PC-3 (cell line): ENCODE measurements at regions of chr6 and their contacts with region 1.

Region 1: GRCh38 chr6:7541175-7542064 is at the start of gene DSP:
- DNase-seq: peak; percentile 86
- ATAC-seq: peak; percentile 72
- H3K4me3 ChIP-seq: peak within 1 kb of the TSS; percentile 95
- H3K27ac ChIP-seq: peak within 1 kb of the TSS; percentile 74
- H3K4me1 ChIP-seq: peaks cover 27% of the 10 kb centered on the region
- H3K27me3 ChIP-seq: no peaks in the 10 kb centered on the region
- CTCF ChIP-seq: no peak
- total RNA-seq, gene DSP: 54.7 and 71.6 TPM in 2 replicates

Region 2: GRCh38 chr6:7312616-7313504 is 228.6 kb before region 1 on chr6 and contains the start of gene SSR1:
- CTCF ChIA-PET with region 1: no interaction called
- POLR2A ChIA-PET with region 1: no interaction called
- intact Hi-C with region 1: loop called (anchors 1 kb)
- DNase-seq: peak; percentile 97
- ATAC-seq: peak; percentile 95
- H3K4me3 ChIP-seq: peak within 1 kb of the TSS; percentile 91
- H3K27ac ChIP-seq: peak within 1 kb of the TSS; percentile 53
- H3K4me1 ChIP-seq: peaks cover 18% of the 10 kb centered on the region
- H3K27me3 ChIP-seq: no peaks in the 10 kb centered on the region
- CTCF ChIP-seq: no peak
- total RNA-seq, gene SSR1: 65.2 and 67.2 TPM in 2 replicates

Region 3: GRCh38 chr6:7389451-7390225 is 151.8 kb before region 1 on chr6 and contains the starts of genes CAGE1 and RIOK1:
- CTCF ChIA-PET with region 1: interaction called, 4 read pairs
- POLR2A ChIA-PET with region 1: no interaction called
- intact Hi-C with region 1: loop called (anchors 1 kb)
- DNase-seq: peak; percentile 91
- ATAC-seq: peak; percentile 96
- H3K4me3 ChIP-seq: peak within 1 kb of the TSS; percentile 82
- H3K27ac ChIP-seq: peak within 1 kb of the TSS; percentile 88
- H3K4me1 ChIP-seq: peaks cover 20% of the 10 kb centered on the region
- H3K27me3 ChIP-seq: no peaks in the 10 kb centered on the region
- CTCF ChIP-seq: no peak
- total RNA-seq, gene CAGE1: 0.29 TPM in 1 of 2 replicates, not detected in the other
- total RNA-seq, gene RIOK1: 29.8 and 39.9 TPM in 2 replicates

Region 4: DNA sequence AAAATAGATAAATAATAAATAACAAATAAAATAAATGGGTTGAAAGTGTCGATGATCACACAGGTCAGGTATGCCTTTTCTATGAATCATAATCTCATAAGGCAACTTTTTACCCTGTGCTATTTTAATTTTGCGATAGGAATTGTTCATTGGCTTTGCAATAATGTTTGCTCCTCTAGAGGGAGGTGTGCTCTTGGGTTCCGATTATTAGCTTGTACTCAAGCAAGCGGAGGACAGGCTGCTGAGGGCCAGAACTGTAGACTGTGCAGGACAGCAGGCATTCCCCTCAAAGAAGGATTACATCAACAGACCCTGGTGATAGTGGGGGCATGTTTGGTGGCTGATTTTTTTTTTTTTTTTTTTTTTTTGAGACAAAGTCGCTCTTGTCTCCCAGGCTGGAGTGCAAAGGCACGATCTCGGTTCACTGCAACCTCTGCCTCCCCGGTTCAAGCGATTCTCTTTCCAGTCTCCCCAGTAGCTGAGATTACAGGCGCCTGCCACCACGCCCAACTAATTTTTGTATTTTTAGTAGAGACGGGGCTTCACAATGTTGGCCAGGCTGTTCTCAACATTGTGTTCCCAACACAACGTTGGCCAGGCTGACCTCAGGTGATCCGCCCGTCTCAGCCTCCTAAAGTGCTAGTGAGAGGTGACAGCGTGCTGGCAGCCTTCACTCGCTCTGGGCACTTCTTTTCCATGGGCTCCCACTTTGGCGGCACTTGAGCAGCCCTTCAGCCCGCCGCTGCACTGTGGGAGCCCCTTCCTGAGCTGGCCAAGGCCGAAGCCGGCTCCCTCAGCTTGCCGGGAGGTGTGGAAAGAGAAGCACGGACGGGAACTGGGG is 116.2 kb before region 1 on chr6:
- CTCF ChIA-PET with region 1: interaction called, 3 read pairs
- POLR2A ChIA-PET with region 1: no interaction called
- intact Hi-C with region 1: loop called (anchors 2 kb)
- DNase-seq: peak; percentile 77
- ATAC-seq: peak; percentile 95
- H3K4me3 ChIP-seq: no peak overlapping the region
- H3K27ac ChIP-seq: no peak overlapping the region
- H3K4me1 ChIP-seq: no peaks in the 10 kb centered on the region
- H3K27me3 ChIP-seq: no peaks in the 10 kb centered on the region
- CTCF ChIP-seq: peak; percentile 72

Region 5: DNA sequence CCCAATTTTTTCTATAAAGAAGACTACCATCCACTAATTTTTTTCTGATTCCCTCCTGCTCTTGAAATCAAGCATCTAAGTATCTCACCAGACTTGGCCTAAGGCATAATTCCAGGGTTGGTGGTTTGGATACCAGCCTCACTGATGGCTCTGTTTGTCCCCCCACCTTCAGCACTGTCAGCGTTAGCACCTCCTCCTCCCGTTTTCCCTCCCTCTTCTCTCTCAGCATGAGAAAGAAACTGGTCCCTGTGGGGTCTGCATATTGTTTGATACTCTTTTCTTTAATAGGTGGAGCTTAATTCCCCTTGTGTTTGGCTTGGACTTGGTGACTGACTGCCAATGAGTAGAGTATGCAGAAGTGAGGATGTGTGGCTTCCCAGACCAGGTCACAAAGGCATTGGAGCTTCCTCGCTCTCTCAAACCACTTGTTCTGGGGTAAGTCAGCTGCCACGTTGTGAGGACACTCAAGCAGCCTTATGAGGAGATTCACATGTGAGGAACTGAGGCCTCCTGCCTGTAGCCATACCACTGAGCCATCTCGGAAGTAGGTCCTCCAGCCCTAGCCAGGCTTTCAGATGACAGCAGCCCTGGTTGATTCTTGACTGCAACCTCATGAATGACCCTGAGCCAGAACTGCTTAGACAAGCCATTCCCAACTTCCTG is 86.6 kb before region 1 on chr6:
- CTCF ChIA-PET with region 1: no interaction called
- POLR2A ChIA-PET with region 1: no interaction called
- intact Hi-C with region 1: no loop called
- DNase-seq: no peak
- ATAC-seq: no peak
- H3K4me3 ChIP-seq: no peak overlapping the region
- H3K27ac ChIP-seq: no peak overlapping the region
- H3K4me1 ChIP-seq: no peaks in the 10 kb centered on the region
- H3K27me3 ChIP-seq: no peaks in the 10 kb centered on the region
- CTCF ChIP-seq: no peak

Region 6: GRCh38 chr6:7505187-7505811 is 36.1 kb before region 1 on chr6:
- CTCF ChIA-PET with region 1: no interaction called
- POLR2A ChIA-PET with region 1: interaction called, 3 read pairs
- intact Hi-C with region 1: loop called (anchors 5 kb)
- DNase-seq: peak; percentile 96
- ATAC-seq: peak; percentile 98
- H3K4me3 ChIP-seq: peak overlapping the region; percentile 49
- H3K27ac ChIP-seq: peak overlapping the region; percentile 93
- H3K4me1 ChIP-seq: peaks cover 21% of the 10 kb centered on the region
- H3K27me3 ChIP-seq: no peaks in the 10 kb centered on the region
- CTCF ChIP-seq: no peak

Region 7: DNA sequence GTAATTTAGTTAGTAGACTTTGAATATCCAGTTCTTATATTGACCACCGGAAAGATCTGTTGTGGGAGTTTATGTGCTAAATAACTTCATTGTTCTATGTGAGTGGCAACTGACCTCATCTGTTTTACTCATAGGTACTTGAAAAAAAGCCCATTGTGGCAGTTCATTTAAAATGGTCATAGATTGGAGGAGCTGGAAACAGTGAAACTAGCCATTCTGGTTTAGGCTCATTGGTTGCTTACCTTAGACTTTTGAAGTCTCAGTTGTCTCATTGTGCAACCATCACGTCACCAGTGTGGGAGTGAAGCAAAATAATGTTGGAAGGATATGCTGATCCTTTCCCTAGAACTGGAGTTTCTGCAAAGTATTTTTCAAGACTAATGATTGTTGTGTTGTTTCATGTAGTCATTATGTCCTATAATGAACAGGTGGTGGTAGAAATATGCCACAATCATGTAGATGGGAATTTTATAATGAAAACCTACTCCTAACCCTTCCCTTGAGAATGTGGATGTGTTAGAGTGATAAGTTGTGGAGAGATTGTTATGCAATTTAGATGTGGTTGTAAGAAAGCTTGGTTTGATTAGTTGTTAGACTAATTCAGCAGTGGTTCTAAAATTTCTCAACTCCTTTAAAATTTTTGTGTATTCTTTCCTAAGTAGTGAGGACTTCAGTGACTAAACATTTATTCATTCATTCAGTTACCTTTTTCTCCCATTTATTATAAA is 18.4 kb after region 1 on chr6:
- CTCF ChIA-PET with region 1: no interaction called
- POLR2A ChIA-PET with region 1: interaction called, 27 read pairs
- intact Hi-C with region 1: no loop called
- DNase-seq: peak; percentile 74
- ATAC-seq: no peak; the same call in 1 of the 2 replicates
- H3K4me3 ChIP-seq: no peak overlapping the region
- H3K27ac ChIP-seq: peak overlapping the region; percentile 80
- H3K4me1 ChIP-seq: peaks cover 27% of the 10 kb centered on the region
- H3K27me3 ChIP-seq: no peaks in the 10 kb centered on the region
- CTCF ChIP-seq: no peak

Region 8: DNA sequence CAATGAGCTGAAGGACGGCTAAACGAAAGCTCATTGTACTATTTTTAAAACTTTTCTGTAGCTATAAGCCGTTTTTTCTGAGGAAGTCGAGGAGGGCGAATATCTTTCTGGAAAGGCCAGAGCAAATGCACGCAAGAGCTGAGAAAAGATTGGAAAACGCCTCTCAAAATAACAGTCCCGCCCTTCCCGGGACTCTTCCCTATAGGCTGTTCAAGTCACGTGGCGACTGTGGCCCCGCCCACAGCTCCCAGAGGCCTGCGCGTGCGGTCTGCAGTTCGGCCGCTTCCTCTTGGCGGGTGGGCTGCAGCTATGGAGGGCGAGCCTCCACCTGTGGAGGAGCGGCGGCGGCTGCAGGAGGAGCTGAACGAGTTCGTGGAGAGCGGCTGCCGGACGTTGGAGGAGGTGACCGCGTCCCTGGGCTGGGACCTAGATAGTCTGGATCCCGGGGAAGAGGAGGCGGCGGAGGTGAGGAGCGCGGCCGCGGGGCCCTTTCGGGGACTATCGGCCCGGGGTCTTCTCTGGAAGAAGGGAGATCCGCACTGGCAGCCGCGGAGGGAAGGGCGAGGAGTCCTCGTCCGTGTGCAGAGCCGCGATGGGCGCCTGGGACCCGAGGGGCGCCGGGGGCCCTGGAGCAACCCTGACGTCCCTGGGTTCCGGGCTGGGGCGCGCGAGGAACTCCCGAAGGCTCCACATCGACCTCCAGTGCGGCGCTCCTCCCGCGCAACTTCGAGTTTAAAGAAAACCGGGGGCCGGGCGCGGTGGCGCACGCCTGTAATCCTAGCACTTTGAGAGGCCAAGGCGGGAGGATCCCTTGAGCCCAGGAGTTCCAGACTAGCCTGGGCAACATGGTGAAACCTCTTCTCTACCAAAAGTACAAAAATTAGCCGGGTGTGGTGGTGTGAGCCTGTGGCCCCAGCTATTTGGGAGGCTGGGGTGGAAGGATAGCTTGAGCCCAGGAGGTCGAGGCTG is 48.8 kb after region 1 on chr6 and contains the start of gene SNRNP48:
- CTCF ChIA-PET with region 1: no interaction called
- POLR2A ChIA-PET with region 1: no interaction called
- intact Hi-C with region 1: loop called (anchors 5 kb)
- DNase-seq: peak; percentile 95
- ATAC-seq: peak; percentile 97
- H3K4me3 ChIP-seq: peak within 1 kb of the TSS; percentile 94
- H3K27ac ChIP-seq: no peak within 1 kb of the TSS
- H3K4me1 ChIP-seq: peaks cover 18% of the 10 kb centered on the region
- H3K27me3 ChIP-seq: no peaks in the 10 kb centered on the region
- CTCF ChIP-seq: no peak
- total RNA-seq, gene SNRNP48: 7.0 and 7.7 TPM in 2 replicates